ENCODE measurements at regions of chr10 and their contacts with region 1.

Region 1: GRCh38 chr10:70461215-70461986 is 17.2 kb upstream of the PALD1 start:
- DNase-seq: peak; percentile 62
- H3K4me3 Mint-ChIP-seq: no peak overlapping the region
- H3K27ac Mint-ChIP-seq: no peak overlapping the region
- H3K4me1 Mint-ChIP-seq: peaks cover 2% of the 10 kb centered on the region
- H3K27me3 Mint-ChIP-seq: peaks cover 29% of the 10 kb centered on the region

Region 2: GRCh38 chr10:70445718-70446657 is 15.4 kb before region 1 on chr10:
- CTCF ChIA-PET with region 1: interaction called, 10 read pairs
- POLR2A ChIA-PET with region 1: no interaction called
- intact Hi-C with region 1: no loop called
- DNase-seq: no peak
- H3K4me3 Mint-ChIP-seq: no peak overlapping the region
- H3K27ac Mint-ChIP-seq: no peak overlapping the region
- H3K4me1 Mint-ChIP-seq: peaks cover 7% of the 10 kb centered on the region
- H3K27me3 Mint-ChIP-seq: peaks cover 25% of the 10 kb centered on the region

Region 3: DNA sequence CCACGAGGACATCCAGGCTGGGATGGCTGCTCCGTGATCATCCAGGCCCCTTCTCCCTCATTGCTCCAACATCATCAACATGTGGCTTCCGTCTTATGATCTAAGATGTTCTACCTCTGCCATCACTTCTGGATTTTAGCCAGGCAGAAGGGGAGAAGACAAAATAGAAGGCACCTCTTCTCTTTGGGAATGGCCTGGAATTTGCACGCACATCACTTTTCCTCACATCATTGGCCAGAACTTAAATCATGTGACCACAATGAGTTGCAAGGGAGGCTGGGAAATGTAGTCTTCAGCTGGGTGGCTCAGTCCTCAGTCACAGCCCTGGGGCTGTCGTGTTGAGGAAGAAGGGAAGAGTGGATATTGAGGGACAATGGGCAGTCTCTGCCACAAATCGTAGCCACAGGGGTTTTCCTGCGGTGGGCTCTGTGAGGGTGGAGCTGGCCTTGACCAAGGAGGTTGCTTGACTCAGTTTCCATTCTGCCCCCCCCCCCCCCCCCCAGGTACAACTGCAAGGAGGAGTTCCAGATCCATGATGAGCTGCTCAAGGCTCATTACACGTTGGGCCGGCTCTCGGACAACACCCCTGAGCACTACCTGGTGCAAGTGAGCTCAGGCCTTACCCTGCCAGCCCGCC is 67.4 kb after region 1 on chr10:
- CTCF ChIA-PET with region 1: interaction called, 18 read pairs
- POLR2A ChIA-PET with region 1: no interaction called
- intact Hi-C with region 1: no loop called
- DNase-seq: no peak
- H3K4me3 Mint-ChIP-seq: no peak overlapping the region
- H3K27ac Mint-ChIP-seq: no peak overlapping the region
- H3K4me1 Mint-ChIP-seq: no peaks in the 10 kb centered on the region
- H3K27me3 Mint-ChIP-seq: no peaks in the 10 kb centered on the region

Region 4: GRCh38 chr10:70549962-70550458 is 88.6 kb after region 1 on chr10:
- CTCF ChIA-PET with region 1: interaction called, 22 read pairs
- POLR2A ChIA-PET with region 1: no interaction called
- intact Hi-C with region 1: no loop called
- DNase-seq: peak; percentile 82
- H3K4me3 Mint-ChIP-seq: no peak overlapping the region
- H3K27ac Mint-ChIP-seq: no peak overlapping the region
- H3K4me1 Mint-ChIP-seq: no peaks in the 10 kb centered on the region
- H3K27me3 Mint-ChIP-seq: no peaks in the 10 kb centered on the region

Region 5: DNA sequence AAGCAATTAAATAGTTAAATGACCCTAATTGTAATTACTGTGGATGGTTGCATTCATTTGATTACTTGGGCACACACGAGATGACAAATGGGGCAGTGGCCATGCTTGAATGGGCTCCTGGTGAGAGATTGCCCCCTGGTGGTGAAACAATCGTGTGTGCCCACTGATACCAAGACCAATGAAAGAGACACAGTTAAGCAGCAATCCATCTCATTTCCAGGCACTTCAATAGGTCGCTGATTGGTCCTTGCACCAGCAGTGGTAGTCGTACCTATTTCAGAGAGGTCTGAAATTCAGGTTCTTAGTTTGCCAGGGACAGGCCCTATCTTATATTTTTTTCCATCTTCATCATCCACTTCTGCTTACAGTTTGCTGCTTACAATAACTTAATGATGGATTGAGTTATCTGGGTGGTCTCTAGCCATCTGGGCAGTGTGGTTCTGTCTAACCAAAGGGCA is 418.7 kb after region 1 on chr10:
- CTCF ChIA-PET with region 1: interaction called, 3 read pairs
- POLR2A ChIA-PET with region 1: no interaction called
- intact Hi-C with region 1: loop called (anchors 5 kb)
- DNase-seq: peak; percentile 85
- H3K4me3 Mint-ChIP-seq: no peak overlapping the region
- H3K27ac Mint-ChIP-seq: peak overlapping the region; percentile 67
- H3K4me1 Mint-ChIP-seq: peaks cover 9% of the 10 kb centered on the region
- H3K27me3 Mint-ChIP-seq: no peaks in the 10 kb centered on the region

Measured in activated CD4-positive, alpha-beta memory T cell treated with anti-CD3 and anti-CD28 coated beads for 36 hours (primary cell).